Activated CD4-positive, alpha-beta memory T cell treated with anti-CD3 and anti-CD28 coated beads, Interleukin-2, amount 10 ng/mL, durations not matched to agents 7 days and 5 days (primary cell): ENCODE measurements at regions of chr11 and their contacts with region 1.

Region 1: DNA sequence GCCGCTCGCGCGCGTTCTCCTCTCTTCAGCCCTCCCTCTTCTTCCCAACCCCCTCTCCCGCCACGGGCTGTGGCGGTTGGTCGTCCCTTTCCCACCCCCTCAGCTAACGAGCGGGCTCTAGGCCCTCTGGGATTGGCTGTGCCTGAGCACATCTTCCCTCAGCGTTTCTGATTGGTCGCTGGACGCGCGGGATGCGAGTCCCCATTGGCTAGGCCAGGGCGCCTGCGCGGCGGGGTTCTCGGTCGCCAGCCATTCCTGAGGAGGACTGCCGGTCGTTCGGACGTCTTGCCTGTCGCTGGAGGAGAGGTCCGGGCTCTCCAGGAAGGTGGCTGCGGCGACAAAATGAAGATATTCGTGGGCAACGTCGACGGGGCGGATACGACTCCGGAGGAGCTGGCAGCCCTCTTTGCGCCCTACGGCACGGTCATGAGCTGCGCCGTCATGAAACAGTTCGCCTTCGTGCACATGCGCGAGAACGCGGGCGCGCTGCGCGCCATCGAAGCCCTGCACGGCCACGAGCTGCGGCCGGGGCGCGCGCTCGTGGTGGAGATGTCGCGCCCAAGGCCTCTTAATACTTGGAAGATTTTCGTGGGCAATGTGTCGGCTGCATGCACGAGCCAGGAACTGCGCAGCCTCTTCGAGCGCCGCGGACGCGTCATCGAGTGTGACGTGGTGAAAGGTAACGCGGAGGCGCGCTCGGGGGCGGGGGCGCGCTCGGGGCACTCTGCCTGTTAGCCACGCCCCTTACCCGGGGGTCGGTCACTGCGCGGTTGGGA is at the start of gene RBM14:
- DNase-seq: peak; percentile 98
- H3K4me3 Mint-ChIP-seq: peak within 1 kb of the TSS; percentile 97
- H3K27ac Mint-ChIP-seq: peak within 1 kb of the TSS; percentile 98
- H3K4me1 Mint-ChIP-seq: peaks cover 43% of the 10 kb centered on the region
- H3K27me3 Mint-ChIP-seq: no peaks in the 10 kb centered on the region
- total RNA-seq, gene RBM14: 116 to 120 TPM

Region 2: GRCh38 chr11:66318600-66318970 is 298.0 kb before region 1 on chr11:
- CTCF ChIA-PET with region 1: no interaction called
- POLR2A ChIA-PET with region 1: no interaction called
- DNase-seq: no peak
- H3K4me3 Mint-ChIP-seq: no peak overlapping the region
- H3K27ac Mint-ChIP-seq: peak overlapping the region; percentile 10
- H3K4me1 Mint-ChIP-seq: peaks cover 33% of the 10 kb centered on the region
- H3K27me3 Mint-ChIP-seq: peaks cover 13% of the 10 kb centered on the region

Region 3: DNA sequence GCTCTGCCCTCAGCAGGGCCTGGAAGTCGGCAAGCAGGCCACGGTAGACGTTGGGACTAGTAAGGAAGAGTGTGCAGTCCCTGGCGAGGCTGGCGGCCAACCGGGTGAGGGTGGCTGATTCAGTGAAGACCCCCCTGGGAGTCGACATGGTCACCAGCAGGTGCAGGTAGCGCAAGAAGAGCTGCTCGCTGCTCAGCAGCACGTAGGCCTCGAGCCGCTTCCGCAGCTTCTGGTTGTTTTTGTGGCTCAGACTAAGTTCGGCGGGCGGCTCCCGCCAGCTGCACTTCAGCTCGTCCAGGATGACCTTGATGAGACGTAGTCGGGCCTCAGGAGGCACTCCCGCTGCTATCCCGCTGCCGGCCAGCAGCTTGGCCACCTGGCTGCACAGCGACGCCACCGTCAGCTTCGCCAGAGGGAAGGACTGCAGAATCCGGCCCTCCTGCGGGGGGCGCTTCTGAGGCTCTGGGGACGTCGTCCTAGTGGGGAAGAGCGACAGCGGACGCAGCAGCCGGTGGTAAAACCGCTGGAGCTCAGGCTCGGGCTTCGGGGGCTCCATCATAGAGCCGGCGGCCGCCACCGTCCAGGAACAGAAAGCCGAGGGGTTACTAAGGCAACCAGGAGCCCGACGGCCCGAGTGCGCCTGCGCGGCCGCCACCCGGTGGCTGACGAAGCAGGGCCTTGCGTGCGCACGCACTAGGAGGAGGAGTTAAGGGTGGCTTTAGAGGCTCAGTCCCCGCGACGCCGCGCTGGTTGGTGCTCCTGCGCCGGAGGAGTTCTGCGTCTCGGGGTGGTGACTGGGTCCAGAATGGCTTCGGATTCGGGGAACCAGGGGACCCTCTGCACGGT is 23.9 kb before region 1 on chr11 and contains the starts of genes CCDC87 and CCS:
- CTCF ChIA-PET with region 1: interaction called, 24 read pairs
- POLR2A ChIA-PET with region 1: interaction called, 86 read pairs
- DNase-seq: peak; percentile 99
- H3K4me3 Mint-ChIP-seq: peak within 1 kb of the TSS; percentile 100
- H3K27ac Mint-ChIP-seq: peak within 1 kb of the TSS; percentile 92
- H3K4me1 Mint-ChIP-seq: peaks cover 37% of the 10 kb centered on the region
- H3K27me3 Mint-ChIP-seq: no peaks in the 10 kb centered on the region
- total RNA-seq, gene CCDC87: not detected
- total RNA-seq, gene CCS: 32.8 to 33.2 TPM

Region 4: GRCh38 chr11:66632952-66633351 is 16.4 kb after region 1 on chr11:
- CTCF ChIA-PET with region 1: interaction called, 18 read pairs
- POLR2A ChIA-PET with region 1: interaction called, 125 read pairs
- DNase-seq: no peak
- H3K4me3 Mint-ChIP-seq: no peak overlapping the region
- H3K27ac Mint-ChIP-seq: no peak overlapping the region
- H3K4me1 Mint-ChIP-seq: peaks cover 22% of the 10 kb centered on the region
- H3K27me3 Mint-ChIP-seq: no peaks in the 10 kb centered on the region

Region 5: DNA sequence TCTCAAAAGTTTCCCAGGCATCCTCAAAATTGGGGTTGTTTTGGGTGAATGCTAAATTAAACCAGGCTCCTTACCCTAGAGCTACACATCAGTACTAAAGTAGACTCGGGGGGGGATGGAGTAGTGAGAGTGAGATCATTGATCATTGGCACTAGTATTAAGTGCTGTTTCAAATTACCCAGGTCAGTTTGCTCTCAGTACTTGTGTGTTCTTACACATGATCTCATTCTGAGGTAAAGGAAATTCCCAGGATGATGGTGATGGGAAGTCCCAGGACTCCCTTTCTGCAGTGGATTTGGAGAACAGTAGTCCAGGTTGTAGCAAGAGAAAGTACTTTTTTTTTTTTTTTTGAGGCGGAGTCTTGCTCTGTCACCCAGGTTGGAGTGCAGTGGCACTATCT is 34.4 kb after region 1 on chr11:
- CTCF ChIA-PET with region 1: no interaction called
- POLR2A ChIA-PET with region 1: interaction called, 12 read pairs
- DNase-seq: no peak
- H3K4me3 Mint-ChIP-seq: no peak overlapping the region
- H3K27ac Mint-ChIP-seq: no peak overlapping the region
- H3K4me1 Mint-ChIP-seq: peaks cover 27% of the 10 kb centered on the region
- H3K27me3 Mint-ChIP-seq: no peaks in the 10 kb centered on the region